A549 (cell line): ENCODE measurements at regions of chr15 and their contacts with region 1.

Region 1: DNA sequence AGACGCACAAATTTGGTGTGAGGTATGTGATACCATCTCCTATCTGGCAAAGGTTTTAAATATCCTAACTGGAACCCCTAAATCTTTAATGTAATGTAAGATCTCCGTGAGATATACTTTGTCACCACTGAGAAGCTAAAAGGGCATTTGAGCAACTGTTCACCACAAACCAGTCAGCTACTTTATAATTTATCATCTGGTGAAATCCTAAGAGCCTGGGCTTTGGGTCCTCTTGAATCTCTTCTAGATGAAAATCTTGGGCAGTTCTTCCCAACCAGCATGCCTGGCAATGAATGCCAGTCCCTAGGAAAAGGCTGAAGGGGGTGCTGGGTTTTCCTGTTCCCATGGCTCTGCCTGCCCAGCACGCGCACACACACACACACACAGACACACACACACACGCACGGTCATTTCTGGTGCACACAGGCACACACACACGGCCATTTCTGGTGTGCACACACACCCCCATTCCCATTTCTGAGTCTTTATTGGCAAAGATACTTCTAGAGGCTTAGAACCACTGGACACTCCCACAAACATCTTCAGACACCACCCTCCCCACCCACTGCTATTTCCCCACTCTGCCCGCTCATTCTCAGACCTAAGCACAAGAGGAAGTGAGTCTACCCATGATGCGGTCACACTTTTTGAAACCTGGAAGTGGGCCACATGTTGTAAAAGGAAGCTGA is 72.6 kb downstream of the MYO1E start:
- DNase-seq: peak; percentile 91 to 97
- ATAC-seq: peak; percentile 84 to 87
- H3K4me3 ChIP-seq: peak overlapping the region; percentile 18
- H3K27ac ChIP-seq: peak overlapping the region; percentile 93 to 95
- H3K4me1 ChIP-seq: peaks cover 100% of the 10 kb centered on the region
- CTCF ChIP-seq: no peak
- EP300 ChIP-seq: peak; percentile 67 to 82; a peak in 3 of 5 replicates
- POLR2A ChIP-seq: no peak; the same call in 1 of the 2 replicates
- RAD21 ChIP-seq: peak; percentile 17 to 46; a peak in 4 of 5 replicates

Region 2: DNA sequence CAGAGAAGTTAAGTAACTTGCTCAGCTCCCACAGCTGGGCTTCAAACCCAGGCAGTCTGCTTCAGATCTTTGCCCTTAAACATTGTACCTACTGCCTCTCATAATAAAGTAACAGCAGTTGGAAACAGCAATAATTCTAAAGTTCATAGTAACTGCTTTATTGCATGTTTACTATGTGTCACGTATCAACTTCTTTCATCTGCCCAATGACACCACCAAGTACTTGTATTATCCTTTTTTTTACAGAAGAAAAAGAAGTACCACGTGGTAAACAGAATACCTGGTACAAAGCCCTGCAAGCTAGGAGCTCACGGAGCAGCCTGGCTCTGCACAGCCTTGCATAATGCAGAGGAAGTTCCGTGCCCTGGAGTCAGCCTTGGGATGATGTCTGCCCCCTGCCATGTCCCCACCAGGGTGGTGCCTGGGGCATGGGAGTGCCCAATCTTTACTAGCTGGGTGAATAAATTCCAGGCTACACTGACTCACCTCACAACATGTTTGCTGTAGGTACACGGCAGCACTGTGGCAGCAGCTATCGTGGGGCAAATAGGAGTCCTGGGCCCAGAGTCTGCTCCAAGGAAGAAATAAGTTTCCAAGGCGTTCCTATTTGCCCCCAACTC is 16.2 kb before region 1 on chr15:
- CTCF ChIA-PET with region 1: interaction called, 35 read pairs
- POLR2A ChIA-PET with region 1: interaction called, 35 read pairs
- DNase-seq: peak; percentile 99
- ATAC-seq: peak; percentile 91
- H3K4me3 ChIP-seq: 0 out of 3 replicates have a peak overlapping the region, but pooled peaks have one; percentile 8
- H3K27ac ChIP-seq: peak overlapping the region; percentile 93
- H3K4me1 ChIP-seq: peaks cover 84% of the 10 kb centered on the region
- CTCF ChIP-seq: no peak
- EP300 ChIP-seq: peak; percentile 98 to 99
- POLR2A ChIP-seq: peak; percentile 36
- RAD21 ChIP-seq: peak; percentile 43 to 81

Region 3: GRCh38 chr15:59406446-59406845 is 106.4 kb after region 1 on chr15:
- CTCF ChIA-PET with region 1: no interaction called
- POLR2A ChIA-PET with region 1: no interaction called
- DNase-seq: no peak
- ATAC-seq: no peak
- H3K4me3 ChIP-seq: no peak overlapping the region
- H3K27ac ChIP-seq: no peak overlapping the region
- H3K4me1 ChIP-seq: peaks cover 27% of the 10 kb centered on the region
- CTCF ChIP-seq: no peak
- EP300 ChIP-seq: no peak
- POLR2A ChIP-seq: no peak
- RAD21 ChIP-seq: no peak